ENCODE measurements at regions of chr3 and their contacts with region 1.

Region 1: DNA sequence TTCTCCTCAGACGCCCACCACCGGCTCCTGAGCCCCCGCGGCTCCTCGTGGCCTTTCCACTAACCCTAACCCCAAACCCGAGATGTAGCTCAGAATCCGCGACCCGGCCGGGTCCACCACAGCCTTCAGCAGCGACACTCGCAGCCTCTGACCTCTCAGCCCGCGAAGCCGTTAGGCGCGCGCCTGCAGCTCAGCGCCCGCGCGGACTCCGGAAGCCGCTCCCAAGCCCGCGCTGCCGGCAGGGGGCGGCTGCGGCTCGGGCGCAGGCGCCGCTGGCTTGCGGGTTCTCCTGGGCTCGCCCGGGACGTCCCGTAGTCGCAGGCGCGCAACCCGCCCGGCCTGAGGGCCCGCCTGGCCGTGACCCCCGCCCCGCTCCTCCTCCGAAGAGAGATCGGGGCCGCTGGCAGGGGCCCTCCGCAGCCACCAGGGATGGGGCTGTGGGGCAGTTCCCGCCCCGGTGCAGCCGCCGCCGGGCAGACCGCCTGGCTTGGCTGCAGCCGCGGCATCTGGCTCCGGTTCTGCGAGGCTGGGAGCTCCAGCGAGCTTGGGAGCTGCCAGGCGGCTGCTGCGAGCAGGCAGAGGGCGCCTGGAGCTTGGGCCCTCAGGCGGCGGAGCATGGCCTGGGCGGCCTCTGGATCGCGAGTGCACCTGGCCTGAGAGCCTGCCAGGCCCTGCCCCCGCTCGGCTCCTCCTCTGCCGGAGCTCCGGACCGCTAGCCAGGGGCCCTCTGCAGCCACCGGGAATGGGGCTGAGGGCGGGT is 120.7 kb downstream of the LMLN start:
- DNase-seq: peak; percentile 95
- H3K4me3 Mint-ChIP-seq: peak overlapping the region; percentile 87
- H3K27ac Mint-ChIP-seq: peak overlapping the region; percentile 89
- H3K4me1 Mint-ChIP-seq: peaks cover 9% of the 10 kb centered on the region
- H3K27me3 Mint-ChIP-seq: peaks cover 57% of the 10 kb centered on the region

Region 2: DNA sequence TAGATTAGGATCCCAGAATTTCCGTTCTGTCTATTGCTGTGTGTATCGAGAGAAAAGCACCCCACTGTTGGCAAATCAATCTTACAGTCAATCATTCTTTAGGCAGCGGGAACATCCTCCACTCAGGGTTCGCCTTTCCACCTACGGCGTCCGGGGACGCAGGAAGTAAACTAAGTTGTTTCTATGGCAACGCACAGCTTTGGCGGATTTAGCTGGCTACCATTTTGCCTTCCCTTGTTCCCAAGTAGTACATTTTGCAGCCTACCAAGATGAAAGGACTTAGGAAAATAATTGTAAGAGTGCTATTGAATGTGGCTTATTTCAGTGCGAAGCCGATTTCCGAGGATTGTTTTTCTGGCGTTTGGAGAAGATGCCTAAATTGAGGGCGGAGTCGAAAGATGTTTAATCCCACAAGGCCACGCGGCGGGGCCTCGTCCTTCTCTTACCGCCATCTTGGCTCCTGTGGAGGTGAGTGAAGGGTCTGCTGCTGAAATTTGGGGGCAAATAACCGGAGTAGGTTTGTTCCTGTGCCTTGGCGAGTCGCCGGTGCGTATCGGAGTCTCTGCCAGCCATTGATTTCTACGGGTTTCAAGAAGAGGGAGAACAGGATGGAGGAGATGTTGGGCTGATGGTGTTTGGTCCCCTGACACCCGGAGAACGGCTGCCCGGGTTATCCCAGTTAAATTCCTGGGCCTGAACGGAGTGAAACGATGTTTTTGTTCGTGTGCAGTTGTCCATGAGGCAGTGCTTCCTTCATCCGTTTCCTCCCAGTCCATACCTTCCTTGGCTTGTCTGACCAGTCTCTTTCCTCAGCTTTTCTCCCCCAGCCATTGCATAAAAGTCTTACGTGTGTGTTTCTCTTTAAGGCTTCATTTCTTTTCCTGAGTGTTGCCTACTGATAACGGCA is 130.7 kb before region 1 on chr3 and contains the start of gene RPL35A:
- intact Hi-C with region 1: loop called (anchors 2 kb)
- DNase-seq: peak; percentile 95
- H3K4me3 Mint-ChIP-seq: peak within 1 kb of the TSS; percentile 99
- H3K27ac Mint-ChIP-seq: peak within 1 kb of the TSS; percentile 99
- H3K4me1 Mint-ChIP-seq: peaks cover 34% of the 10 kb centered on the region
- H3K27me3 Mint-ChIP-seq: peaks cover 2% of the 10 kb centered on the region
- total RNA-seq, gene RPL35A: 1,350 and 1,372 TPM in 2 replicates

Measured in activated CD4-positive, alpha-beta T cell treated with anti-CD3 and anti-CD28 coated beads, Interleukin-2, amount 10 ng/mL, durations not matched to agents 24 days and 14 days (primary cell).